Activated T-helper 2 cell treated with anti-CD3 and anti-CD28 coated beads, Interferon-gamma antibody, Interleukin-2, Interleukin-4, amounts not matched to agents 10 μg/mL and 5 μg/mL and 100 μg/mL, durations not matched to agents 14 hours and 24 hours and 36 hours (primary cell): ENCODE measurements at regions of chr14 and their contacts with region 1.

Region 1: GRCh38 chr14:90383075-90383730 is 13.6 kb upstream of the CALM1 start:
- DNase-seq: peak; percentile 98
- H3K4me3 Mint-ChIP-seq: no peak overlapping the region
- H3K27ac Mint-ChIP-seq: no peak overlapping the region
- H3K4me1 Mint-ChIP-seq: peaks cover 15% of the 10 kb centered on the region
- H3K27me3 Mint-ChIP-seq: no peaks in the 10 kb centered on the region

Region 2: GRCh38 chr14:89954070-89955028 is 428.9 kb before region 1 on chr14 and contains the start of gene EFCAB11:
- intact Hi-C with region 1: loop called (anchors 5 kb)
- DNase-seq: peak; percentile 96
- H3K4me3 Mint-ChIP-seq: peak within 1 kb of the TSS; percentile 87
- H3K27ac Mint-ChIP-seq: peak within 1 kb of the TSS; percentile 81
- H3K4me1 Mint-ChIP-seq: peaks cover 43% of the 10 kb centered on the region
- H3K27me3 Mint-ChIP-seq: no peaks in the 10 kb centered on the region
- total RNA-seq, gene EFCAB11: 7.1 and 9.0 TPM in 2 replicates

Region 3: GRCh38 chr14:90331497-90332435 is 51.4 kb before region 1 on chr14 and contains the start of gene NRDE2:
- intact Hi-C with region 1: loop called (anchors 1 kb)
- DNase-seq: peak; percentile 91
- H3K4me3 Mint-ChIP-seq: peak within 1 kb of the TSS; percentile 89
- H3K27ac Mint-ChIP-seq: peak within 1 kb of the TSS; percentile 93
- H3K4me1 Mint-ChIP-seq: peaks cover 29% of the 10 kb centered on the region
- H3K27me3 Mint-ChIP-seq: peaks cover 20% of the 10 kb centered on the region
- total RNA-seq, gene NRDE2: 23.2 and 25.4 TPM in 2 replicates

Region 4: GRCh38 chr14:90758028-90758889 is 375.1 kb after region 1 on chr14:
- intact Hi-C with region 1: loop called (anchors 5 kb)
- DNase-seq: peak; percentile 92
- H3K4me3 Mint-ChIP-seq: peak overlapping the region; percentile 70
- H3K27ac Mint-ChIP-seq: peak overlapping the region; percentile 68
- H3K4me1 Mint-ChIP-seq: peaks cover 18% of the 10 kb centered on the region
- H3K27me3 Mint-ChIP-seq: peaks cover 19% of the 10 kb centered on the region

Region 5: DNA sequence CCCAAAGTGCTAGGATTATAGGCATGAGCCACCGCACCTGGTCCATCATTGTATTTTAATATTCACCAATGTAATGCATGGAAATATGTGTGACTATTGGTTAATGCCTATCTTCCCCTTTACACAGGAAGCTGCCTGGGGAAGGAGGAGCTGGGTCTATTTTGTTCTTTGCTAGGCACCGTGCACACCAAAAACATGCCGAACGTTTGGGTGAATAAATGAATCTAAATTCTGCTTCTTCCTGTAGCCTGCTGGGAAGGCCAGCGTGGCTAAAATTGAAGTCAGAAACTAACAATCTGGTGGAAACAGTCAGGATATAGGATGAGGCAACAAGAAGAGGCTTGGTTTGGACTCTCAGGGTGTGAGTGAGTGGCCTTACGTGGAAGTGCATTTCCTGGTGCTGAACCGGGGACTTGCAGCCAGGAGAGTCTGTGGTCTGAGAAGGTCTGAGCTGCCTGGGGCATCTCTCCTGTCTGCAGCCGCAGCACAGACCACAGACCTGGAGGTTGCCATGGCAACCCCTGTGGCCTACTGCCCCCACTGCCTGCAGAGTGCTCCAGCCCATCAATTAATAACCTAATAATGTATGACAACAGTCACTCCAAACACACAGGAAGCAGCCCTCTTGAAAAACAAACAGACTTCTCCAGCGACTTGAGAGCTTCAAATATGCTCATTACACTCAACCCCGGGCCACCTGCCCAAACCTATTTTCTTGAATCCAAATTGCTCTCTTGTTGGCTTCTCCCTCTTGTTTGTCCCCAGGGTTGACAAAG is 866.8 kb after region 1 on chr14:
- intact Hi-C with region 1: loop called (anchors 10 kb)
- DNase-seq: peak; percentile 55
- H3K4me3 Mint-ChIP-seq: peak overlapping the region; percentile 23
- H3K27ac Mint-ChIP-seq: peak overlapping the region; percentile 92
- H3K4me1 Mint-ChIP-seq: peaks cover 68% of the 10 kb centered on the region
- H3K27me3 Mint-ChIP-seq: no peaks in the 10 kb centered on the region